ENCODE measurements at regions of chr2 and their contacts with region 1.

Region 1: GRCh38 chr2:157336137-157337010 is 10.8 kb upstream of the ERMN start:
- DNase-seq: peak; percentile 45
- ATAC-seq: peak; percentile 43
- H3K4me3 Mint-ChIP-seq: no peak overlapping the region
- H3K27ac Mint-ChIP-seq: no peak overlapping the region
- H3K4me1 Mint-ChIP-seq: peaks cover 38% of the 10 kb centered on the region
- H3K27me3 Mint-ChIP-seq: no peaks in the 10 kb centered on the region

Region 2: DNA sequence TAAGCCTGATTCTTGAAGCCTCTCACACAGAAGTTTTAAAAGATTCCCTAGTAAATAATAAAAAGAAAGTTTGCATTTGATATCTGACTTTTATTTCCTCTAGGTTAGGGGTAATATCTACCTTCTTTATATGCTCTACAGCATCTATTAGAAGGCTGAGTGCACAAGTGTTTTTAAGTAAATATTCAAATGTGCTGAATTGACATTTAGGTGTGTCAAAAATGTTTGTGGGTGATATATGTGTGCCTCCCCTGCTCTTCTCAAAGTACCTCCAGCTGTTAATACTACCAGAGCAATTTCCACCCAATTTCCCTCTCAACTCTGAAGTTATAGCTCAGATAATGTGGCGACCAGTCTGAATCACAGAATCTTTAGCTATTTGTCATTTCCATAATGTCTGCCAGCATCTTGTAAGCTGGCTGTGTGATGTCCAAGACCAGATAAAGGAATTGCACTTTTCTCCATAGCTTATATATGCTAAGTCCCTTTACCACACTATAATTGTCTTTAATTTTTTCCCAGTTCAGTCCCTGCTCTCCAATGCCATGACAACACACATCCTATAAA is 13.7 kb after region 1 on chr2:
- CTCF ChIA-PET with region 1: interaction called, 40 read pairs
- DNase-seq: no peak
- ATAC-seq: no peak
- H3K4me3 Mint-ChIP-seq: no peak overlapping the region
- H3K27ac Mint-ChIP-seq: no peak overlapping the region
- H3K4me1 Mint-ChIP-seq: no peaks in the 10 kb centered on the region
- H3K27me3 Mint-ChIP-seq: no peaks in the 10 kb centered on the region

Region 3: GRCh38 chr2:157355618-157356017 is 19.2 kb after region 1 on chr2:
- CTCF ChIA-PET with region 1: interaction called, 21 read pairs
- DNase-seq: no peak
- ATAC-seq: no peak
- H3K4me3 Mint-ChIP-seq: no peak overlapping the region
- H3K27ac Mint-ChIP-seq: no peak overlapping the region
- H3K4me1 Mint-ChIP-seq: no peaks in the 10 kb centered on the region
- H3K27me3 Mint-ChIP-seq: no peaks in the 10 kb centered on the region

Region 4: GRCh38 chr2:157367704-157368103 is 31.3 kb after region 1 on chr2:
- CTCF ChIA-PET with region 1: interaction called, 10 read pairs
- DNase-seq: no peak
- ATAC-seq: no peak
- H3K4me3 Mint-ChIP-seq: no peak overlapping the region
- H3K27ac Mint-ChIP-seq: no peak overlapping the region
- H3K4me1 Mint-ChIP-seq: peaks cover 17% of the 10 kb centered on the region
- H3K27me3 Mint-ChIP-seq: no peaks in the 10 kb centered on the region

Region 5: GRCh38 chr2:157395811-157396210 is 59.4 kb after region 1 on chr2:
- CTCF ChIA-PET with region 1: no interaction called
- DNase-seq: no peak
- ATAC-seq: no peak
- H3K4me3 Mint-ChIP-seq: no peak overlapping the region
- H3K27ac Mint-ChIP-seq: no peak overlapping the region
- H3K4me1 Mint-ChIP-seq: peaks cover 4% of the 10 kb centered on the region
- H3K27me3 Mint-ChIP-seq: no peaks in the 10 kb centered on the region

Region 6: GRCh38 chr2:157413326-157414035 is 77.1 kb after region 1 on chr2:
- CTCF ChIA-PET with region 1: interaction called, 27 read pairs
- DNase-seq: peak; percentile 79
- ATAC-seq: peak; percentile 76
- H3K4me3 Mint-ChIP-seq: peak overlapping the region; percentile 49
- H3K27ac Mint-ChIP-seq: peak overlapping the region; percentile 87
- H3K4me1 Mint-ChIP-seq: peaks cover 76% of the 10 kb centered on the region
- H3K27me3 Mint-ChIP-seq: no peaks in the 10 kb centered on the region

Region 7: GRCh38 chr2:157420771-157421323 is 84.5 kb after region 1 on chr2:
- CTCF ChIA-PET with region 1: interaction called, 15 read pairs
- DNase-seq: no peak
- ATAC-seq: peak; percentile 63
- H3K4me3 Mint-ChIP-seq: peak overlapping the region; percentile 31
- H3K27ac Mint-ChIP-seq: peak overlapping the region; percentile 87
- H3K4me1 Mint-ChIP-seq: peaks cover 78% of the 10 kb centered on the region
- H3K27me3 Mint-ChIP-seq: no peaks in the 10 kb centered on the region